Psoas muscle (tissue), 8 donors: ENCODE measurements at regions of chr4 and their contacts with region 1.

Region 1: DNA sequence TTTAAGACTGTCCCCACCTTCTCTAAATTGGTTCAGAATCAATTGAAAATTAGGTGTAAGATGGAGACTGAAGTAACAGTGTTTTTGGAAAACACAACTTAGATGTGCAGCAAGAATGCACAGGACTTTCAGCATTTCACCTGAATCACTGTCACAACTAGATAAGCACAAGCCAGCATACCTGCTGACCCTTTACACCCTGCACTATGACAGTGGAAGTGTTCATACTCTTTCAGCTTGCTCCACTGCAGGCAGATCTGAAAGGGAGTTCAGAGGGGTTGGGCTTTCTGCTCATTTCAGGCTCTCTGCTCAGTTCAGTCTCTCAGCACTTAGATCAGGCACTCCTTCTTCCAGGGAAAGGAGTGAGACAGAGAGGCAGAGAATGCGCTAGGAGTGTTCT is 22.8 kb downstream of the DCUN1D4 start:
- DNase-seq: no peak
- ATAC-seq: no peak
- H3K4me3 ChIP-seq: no peak overlapping the region
- H3K27ac ChIP-seq: no peak overlapping the region
- H3K4me1 ChIP-seq: peaks cover 23% of the 10 kb centered on the region
- H3K27me3 ChIP-seq: no peaks in the 10 kb centered on the region
- CTCF ChIP-seq: no peak

Region 2: GRCh38 chr4:51885363-51885762 is 19.6 kb after region 1 on chr4:
- intact Hi-C with region 1: loop called in 1 of 2 experiments (anchors 1 kb)
- DNase-seq: no peak
- ATAC-seq: no peak
- H3K4me3 ChIP-seq: no peak overlapping the region
- H3K27ac ChIP-seq: no peak overlapping the region
- H3K4me1 ChIP-seq: no peaks in the 10 kb centered on the region
- H3K27me3 ChIP-seq: no peaks in the 10 kb centered on the region
- CTCF ChIP-seq: peak; percentile 17

Region 3: GRCh38 chr4:52001616-52002015 is 135.9 kb after region 1 on chr4:
- intact Hi-C with region 1: no loop called
- DNase-seq: no peak
- ATAC-seq: no peak
- H3K4me3 ChIP-seq: no peak overlapping the region
- H3K27ac ChIP-seq: no peak overlapping the region
- H3K4me1 ChIP-seq: no peaks in the 10 kb centered on the region
- H3K27me3 ChIP-seq: no peaks in the 10 kb centered on the region
- CTCF ChIP-seq: no peak